Activated naive CD4-positive, alpha-beta T cell treated with anti-CD3 and anti-CD28 coated beads, Interleukin-2, amount 10 ng/mL, durations not matched to agents 7 days and 5 days (primary cell): ENCODE measurements at regions of chr9 and their contacts with region 1.

Region 1: GRCh38 chr9:127869310-127870152 is 7.9 kb downstream of the AK1 start:
- DNase-seq: peak; percentile 87
- H3K4me3 Mint-ChIP-seq: no peak overlapping the region
- H3K27ac Mint-ChIP-seq: no peak overlapping the region
- H3K4me1 Mint-ChIP-seq: peaks cover 18% of the 10 kb centered on the region
- H3K27me3 Mint-ChIP-seq: no peaks in the 10 kb centered on the region

Region 2: DNA sequence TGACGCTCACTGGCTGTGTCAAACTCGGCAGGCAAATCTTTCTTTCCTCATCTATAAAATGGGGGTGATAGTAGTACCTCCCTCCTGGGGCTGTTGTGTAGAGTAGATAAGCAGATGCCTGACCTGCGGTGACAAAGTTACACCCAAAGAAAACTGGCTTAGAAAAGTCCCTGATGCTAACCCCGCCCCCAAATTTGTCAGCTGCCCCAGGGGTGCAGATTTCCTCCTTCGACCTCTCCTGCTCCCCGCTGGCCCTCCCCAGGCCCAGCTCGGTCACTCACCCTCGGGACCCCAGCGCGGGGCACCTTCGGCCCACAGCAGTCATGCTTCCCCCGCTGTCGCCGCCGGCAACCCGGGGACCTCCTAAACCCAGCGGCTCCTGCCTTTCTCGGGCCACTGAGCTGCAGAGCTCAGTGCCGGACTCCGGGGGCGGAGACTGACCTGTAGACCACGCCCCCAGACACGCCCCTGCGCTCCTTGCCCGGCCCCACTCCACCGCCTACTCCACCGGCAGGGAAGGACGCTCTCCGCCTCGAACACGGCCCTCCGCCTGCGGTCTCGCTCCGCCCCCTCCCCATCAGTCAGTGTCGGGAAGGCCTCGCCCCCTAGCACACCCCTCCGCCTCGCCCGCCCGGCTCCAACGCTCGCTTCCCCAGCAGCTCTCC is 98.5 kb before region 1 on chr9:
- CTCF ChIA-PET with region 1: interaction called, 15 read pairs
- DNase-seq: peak; percentile 99
- H3K4me3 Mint-ChIP-seq: peak overlapping the region; percentile 80
- H3K27ac Mint-ChIP-seq: peak overlapping the region; percentile 93
- H3K4me1 Mint-ChIP-seq: peaks cover 85% of the 10 kb centered on the region
- H3K27me3 Mint-ChIP-seq: no peaks in the 10 kb centered on the region

Region 3: GRCh38 chr9:127785023-127785932 is 84.3 kb before region 1 on chr9:
- CTCF ChIA-PET with region 1: interaction called, 16 read pairs
- DNase-seq: peak; percentile 91
- H3K4me3 Mint-ChIP-seq: peak overlapping the region; percentile 95
- H3K27ac Mint-ChIP-seq: peak overlapping the region; percentile 96
- H3K4me1 Mint-ChIP-seq: peaks cover 75% of the 10 kb centered on the region
- H3K27me3 Mint-ChIP-seq: no peaks in the 10 kb centered on the region

Region 4: GRCh38 chr9:127793093-127793708 is 76.3 kb before region 1 on chr9:
- CTCF ChIA-PET with region 1: interaction called, 16 read pairs
- DNase-seq: no peak
- H3K4me3 Mint-ChIP-seq: no peak overlapping the region
- H3K27ac Mint-ChIP-seq: peak overlapping the region; percentile 79
- H3K4me1 Mint-ChIP-seq: peaks cover 53% of the 10 kb centered on the region
- H3K27me3 Mint-ChIP-seq: no peaks in the 10 kb centered on the region

Region 5: DNA sequence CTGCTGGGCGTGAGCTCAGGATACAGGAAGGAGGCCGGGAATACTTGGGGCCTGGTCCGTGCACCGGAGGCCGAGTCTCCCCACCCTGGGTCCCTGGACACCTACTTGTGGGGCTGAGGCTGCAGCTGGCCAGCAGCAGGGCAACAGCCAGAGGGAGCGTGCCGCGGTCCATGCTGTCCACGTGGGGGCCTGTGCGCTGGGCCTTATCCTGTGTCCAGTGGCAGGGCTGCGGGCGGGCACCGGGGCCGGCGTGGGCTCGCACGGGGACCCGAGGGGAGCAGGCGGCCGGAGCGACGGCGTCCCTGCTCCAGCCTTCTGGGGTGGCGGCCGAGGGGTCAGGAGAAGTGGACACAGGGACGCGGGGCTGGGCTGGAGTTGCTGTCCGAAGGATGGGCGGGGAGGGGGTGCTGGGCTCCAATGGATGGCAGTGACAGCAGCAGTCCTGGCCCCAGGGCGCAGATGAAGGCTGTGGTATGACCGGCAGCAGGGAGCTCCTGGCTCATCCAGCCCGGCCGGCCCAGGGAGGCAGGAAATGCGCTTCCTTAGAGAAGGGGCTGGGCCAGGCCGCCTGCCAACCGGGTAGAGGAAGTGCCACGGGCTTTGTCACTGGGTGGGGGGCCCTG is 15.2 kb before region 1 on chr9 and contains the start of gene ENG:
- CTCF ChIA-PET with region 1: interaction called, 10 read pairs
- DNase-seq: peak; percentile 57
- H3K4me3 Mint-ChIP-seq: peak within 1 kb of the TSS; percentile 88
- H3K27ac Mint-ChIP-seq: peak within 1 kb of the TSS; percentile 88
- H3K4me1 Mint-ChIP-seq: peaks cover 43% of the 10 kb centered on the region
- H3K27me3 Mint-ChIP-seq: peaks cover 5% of the 10 kb centered on the region

Region 6: DNA sequence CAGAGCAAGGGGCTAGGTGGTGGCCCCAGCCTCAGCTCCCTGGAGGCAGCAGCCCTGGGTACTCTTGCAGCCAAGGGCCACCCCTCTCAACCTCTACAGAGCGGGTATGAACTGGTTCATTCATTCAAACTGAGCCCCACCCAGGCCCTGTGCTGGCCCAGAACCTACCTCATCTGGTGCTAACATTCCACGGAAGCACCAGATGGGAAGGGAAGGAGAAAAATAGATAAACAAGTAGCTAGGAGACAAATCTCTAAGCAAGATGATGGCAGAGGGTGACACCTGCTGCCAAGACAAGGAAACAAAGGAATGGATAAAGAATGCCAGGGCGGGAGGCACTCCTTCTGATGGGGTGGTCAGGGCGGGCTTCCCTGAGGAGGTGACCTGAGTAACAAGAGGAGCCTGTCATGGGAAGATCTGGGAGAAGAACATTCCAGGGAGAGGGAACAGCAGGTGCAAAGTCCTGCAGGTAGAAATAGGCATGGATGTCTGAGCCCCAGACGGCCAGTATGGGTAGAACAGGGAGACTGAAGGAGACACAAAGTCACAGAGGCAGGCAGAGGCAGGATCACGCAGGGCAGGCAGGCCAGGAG is 41.2 kb after region 1 on chr9:
- CTCF ChIA-PET with region 1: interaction called, 13 read pairs
- DNase-seq: peak; percentile 48
- H3K4me3 Mint-ChIP-seq: no peak overlapping the region
- H3K27ac Mint-ChIP-seq: peak overlapping the region; percentile 90
- H3K4me1 Mint-ChIP-seq: peaks cover 69% of the 10 kb centered on the region
- H3K27me3 Mint-ChIP-seq: no peaks in the 10 kb centered on the region

Region 7: GRCh38 chr9:127916665-127917613 is 47.4 kb after region 1 on chr9 and contains the start of gene ST6GALNAC4:
- CTCF ChIA-PET with region 1: interaction called, 18 read pairs
- DNase-seq: peak; percentile 97
- H3K4me3 Mint-ChIP-seq: peak within 1 kb of the TSS; percentile 73
- H3K27ac Mint-ChIP-seq: peak within 1 kb of the TSS; percentile 88
- H3K4me1 Mint-ChIP-seq: peaks cover 77% of the 10 kb centered on the region
- H3K27me3 Mint-ChIP-seq: peaks cover 13% of the 10 kb centered on the region

Region 8: DNA sequence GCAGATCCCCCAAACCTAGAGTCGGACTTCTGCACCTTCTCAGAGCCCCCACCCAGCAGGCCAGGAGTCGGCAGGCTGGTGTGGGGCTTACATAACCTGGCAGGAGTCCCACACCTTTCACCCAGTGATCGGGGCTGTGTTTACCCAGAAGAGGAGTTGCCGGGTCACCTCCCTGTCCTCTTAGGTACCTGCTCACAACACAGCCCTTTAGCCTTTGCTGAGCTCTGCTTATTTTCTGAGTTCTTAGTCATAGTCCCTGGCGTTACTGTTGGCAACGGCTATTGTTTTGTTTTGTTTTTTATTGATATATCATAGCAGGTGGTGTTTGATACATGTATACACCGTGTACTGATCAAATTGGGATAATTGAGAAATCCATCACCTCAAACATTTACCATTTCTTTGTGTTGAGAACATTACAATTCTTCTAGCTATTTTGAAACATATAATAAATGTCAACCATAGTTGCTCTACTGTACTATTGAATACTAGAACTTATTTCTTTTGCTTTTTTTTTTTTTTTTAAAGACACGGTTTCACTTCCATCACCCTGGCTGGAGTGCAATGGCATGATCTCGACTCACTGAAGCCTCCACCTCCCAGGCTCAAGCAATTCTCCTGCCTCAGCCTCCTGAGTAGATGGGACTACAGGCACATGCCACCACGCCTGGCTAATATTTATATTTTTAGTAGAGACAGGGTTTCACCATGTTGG is 121.7 kb after region 1 on chr9:
- CTCF ChIA-PET with region 1: no interaction called
- DNase-seq: no peak
- H3K4me3 Mint-ChIP-seq: no peak overlapping the region
- H3K27ac Mint-ChIP-seq: no peak overlapping the region
- H3K4me1 Mint-ChIP-seq: peaks cover 20% of the 10 kb centered on the region
- H3K27me3 Mint-ChIP-seq: peaks cover 2% of the 10 kb centered on the region